ENCODE measurements at regions of chr3 and their contacts with region 1.

Region 1: DNA sequence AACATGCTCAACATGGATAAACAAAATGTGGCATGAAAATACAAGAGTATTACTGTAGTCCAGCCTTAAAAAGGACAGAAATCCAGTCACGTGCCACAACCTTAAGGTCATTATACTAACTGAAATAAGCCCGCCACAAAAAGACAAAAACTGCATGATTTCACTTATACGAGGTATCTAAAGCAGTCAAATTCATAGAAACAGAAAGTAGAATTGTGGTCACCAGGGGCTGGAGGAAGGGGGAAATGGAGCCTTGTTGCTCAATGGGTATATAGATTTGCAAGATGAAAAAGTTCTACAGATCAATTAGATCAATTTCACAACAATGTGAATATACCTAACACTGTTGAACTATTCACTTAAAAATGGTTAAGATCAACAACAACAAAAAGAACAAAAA is 7.4 kb downstream of the GLB1 start:
- DNase-seq: no peak

Region 2: DNA sequence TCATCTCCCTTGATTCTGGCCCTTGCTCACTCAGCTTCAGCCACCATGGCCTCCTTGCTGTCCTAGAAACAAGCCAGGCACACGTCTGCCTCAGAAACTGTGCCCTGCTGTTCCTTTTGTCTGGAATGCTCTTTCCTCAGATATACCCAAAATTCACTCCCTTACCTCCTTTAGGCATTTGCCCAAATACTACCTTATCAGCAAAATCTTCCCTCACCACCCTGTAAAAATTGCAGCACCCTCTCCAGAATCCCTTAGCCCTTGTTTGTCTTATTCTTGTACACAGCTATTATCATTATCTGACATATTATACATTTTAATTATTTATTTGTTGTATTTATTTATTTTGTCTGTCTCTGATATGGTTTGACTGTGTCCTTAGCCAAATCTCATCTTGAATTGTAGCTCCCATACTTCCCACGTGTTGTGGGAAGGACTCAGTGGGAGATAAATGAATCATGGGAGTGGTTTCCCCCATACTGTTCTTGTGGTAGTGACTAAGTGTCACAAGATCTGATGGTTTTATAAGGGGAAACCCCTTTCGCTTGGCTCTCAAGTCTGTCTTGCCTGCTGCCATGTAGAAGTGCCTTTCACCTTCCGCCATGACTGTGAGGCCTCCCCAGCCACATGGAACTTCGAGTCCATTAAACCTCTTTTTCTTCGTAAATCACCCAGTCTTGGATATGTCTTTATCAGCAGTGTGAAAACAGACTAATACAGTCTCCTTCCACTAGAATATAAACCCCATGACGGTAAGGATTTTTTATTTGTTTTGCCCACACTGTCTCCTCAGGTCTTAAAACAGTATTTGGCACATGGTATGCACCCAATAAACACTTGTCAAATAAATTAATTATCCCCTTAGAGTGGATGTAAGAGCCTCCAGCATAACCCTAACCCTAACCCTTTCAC is 1616.8 kb before region 1 on chr3:
- intact Hi-C with region 1: no loop called
- DNase-seq: no peak

Region 3: DNA sequence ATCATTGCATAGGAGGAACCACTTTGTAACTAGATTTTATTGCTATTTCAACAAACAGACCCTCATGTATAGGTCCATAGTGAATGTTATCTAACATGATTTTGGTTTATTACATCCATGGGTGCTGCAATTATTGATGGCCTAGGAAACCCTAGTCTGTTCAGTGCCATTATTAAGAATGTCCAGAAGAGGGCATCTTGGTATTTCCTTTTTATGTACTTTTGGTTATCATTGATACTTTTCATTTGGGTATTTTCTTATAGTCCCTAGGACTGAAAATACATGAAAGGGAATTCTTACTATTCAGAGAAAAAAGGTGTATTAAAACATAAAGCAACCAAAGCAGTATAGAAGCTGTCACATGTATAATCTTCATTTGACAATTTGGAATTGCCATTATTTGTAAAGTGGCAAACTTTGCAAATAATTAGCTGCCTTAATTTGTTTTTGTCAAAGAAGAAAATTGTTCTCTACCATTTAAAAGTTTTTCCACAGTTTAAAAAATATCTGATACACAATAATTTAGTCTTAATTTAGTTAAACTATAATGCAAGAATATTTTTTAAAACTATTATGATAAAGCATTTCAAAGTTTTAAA is 355.8 kb before region 1 on chr3:
- intact Hi-C with region 1: no loop called
- DNase-seq: no peak

Region 4: DNA sequence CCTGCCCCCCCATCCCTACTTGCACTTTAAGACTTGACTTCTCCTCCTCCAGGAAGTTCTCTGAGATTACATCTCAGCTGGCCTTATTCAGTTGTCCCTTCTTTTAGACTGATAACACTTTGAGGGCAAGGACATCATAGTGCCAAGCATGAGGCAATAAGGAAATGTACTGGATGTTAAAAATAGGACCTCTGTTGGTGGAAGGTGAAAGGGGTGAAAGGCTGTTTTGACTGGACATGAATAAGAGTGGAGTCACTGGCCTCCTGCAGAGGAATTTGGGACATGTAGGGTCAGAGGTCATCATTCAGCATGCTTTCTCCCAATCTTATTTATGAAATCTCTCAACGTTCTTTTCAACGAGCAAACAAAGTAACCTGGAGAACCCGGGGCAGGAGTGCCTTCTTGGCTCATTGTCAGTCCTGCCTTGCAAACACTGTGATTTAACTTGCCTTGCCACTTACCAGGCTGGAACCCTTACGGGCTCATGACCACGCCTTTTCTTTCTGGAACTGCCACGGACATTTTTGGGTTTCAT is 233.1 kb before region 1 on chr3:
- intact Hi-C with region 1: no loop called
- DNase-seq: no peak

Region 5: GRCh38 chr3:33060609-33061337 is 28.7 kb before region 1 on chr3:
- intact Hi-C with region 1: loop called in 1 of 2 experiments (anchors 1 kb)
- DNase-seq: no peak

Region 6: GRCh38 chr3:34568766-34569165 is 1479.3 kb after region 1 on chr3:
- intact Hi-C with region 1: no loop called
- DNase-seq: no peak